Natural killer cell (primary cell): ENCODE measurements at regions of chr3 and their contacts with region 1.

Region 1: DNA sequence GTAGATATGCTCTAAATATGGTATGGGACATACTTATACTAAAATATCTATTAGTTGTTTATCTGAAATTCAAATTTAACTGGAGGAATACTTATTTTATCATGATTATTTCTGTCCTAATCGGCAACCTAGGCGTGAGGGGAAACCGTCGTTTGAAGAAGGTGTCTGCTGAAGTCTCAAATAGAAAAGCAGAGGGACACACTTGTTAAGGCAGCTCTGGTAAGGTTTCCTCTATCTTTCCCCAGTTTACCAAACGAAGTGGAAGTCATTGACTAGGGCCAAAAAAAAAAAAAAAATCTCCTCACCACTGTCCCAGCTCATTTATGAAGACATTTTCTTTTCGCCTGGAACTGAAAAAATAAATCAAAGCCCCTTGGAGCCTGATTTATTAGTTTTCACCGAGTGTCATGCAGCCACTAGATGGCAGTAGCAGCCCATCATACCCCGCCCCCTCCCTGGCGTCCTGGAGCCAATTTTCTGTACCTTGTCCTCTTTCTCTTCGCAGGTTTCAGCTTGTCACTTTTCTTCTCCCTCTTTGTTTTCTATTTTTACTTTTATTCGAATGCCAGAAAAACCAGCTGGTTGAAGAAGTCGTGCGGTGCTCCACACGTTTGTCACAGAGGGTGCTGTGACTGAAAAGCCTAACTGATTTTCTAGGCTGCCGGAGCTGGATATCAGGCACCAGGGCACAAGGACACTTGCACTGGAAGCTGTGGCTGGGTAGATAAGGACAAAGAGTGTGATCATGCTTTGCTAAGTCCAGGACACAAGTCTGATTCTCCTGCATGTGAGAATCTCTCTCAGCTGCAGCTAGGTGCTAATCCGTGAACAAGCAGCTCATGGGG is 238.7 kb downstream of the ZPLD1 start:
- DNase-seq: peak; percentile 47 to 68
- ATAC-seq: peak in 2 of 3 donors; percentile 64 to 75
- H3K4me3 ChIP-seq: no peak overlapping the region
- H3K4me3 Mint-ChIP-seq: no peak overlapping the region
- H3K27ac ChIP-seq: no peak overlapping the region
- H3K27ac Mint-ChIP-seq: no peak overlapping the region
- H3K4me1 ChIP-seq: no peaks in the 10 kb centered on the region
- H3K4me1 Mint-ChIP-seq: peaks cover 5 to 7% of the 10 kb centered on the region in 2 donors
- H3K27me3 ChIP-seq: peaks cover 3% of the 10 kb centered on the region
- H3K27me3 Mint-ChIP-seq: no peaks in the 10 kb centered on the region
- CTCF ChIP-seq: peak; percentile 94

Region 2: GRCh38 chr3:101868534-101869464 is 804.7 kb before region 1 on chr3:
- intact Hi-C with region 1: no loop called
- DNase-seq: no peak
- ATAC-seq: peak in 2 of 3 donors; percentile 21 to 42
- H3K4me3 ChIP-seq: no peak overlapping the region
- H3K4me3 Mint-ChIP-seq: no peak overlapping the region
- H3K27ac ChIP-seq: no peak overlapping the region
- H3K27ac Mint-ChIP-seq: no peak overlapping the region
- H3K4me1 ChIP-seq: no peaks in the 10 kb centered on the region
- H3K4me1 Mint-ChIP-seq: no peaks in the 10 kb centered on the region
- H3K27me3 ChIP-seq: no peaks in the 10 kb centered on the region
- H3K27me3 Mint-ChIP-seq: no peaks in the 10 kb centered on the region
- CTCF ChIP-seq: no peak

Region 3: DNA sequence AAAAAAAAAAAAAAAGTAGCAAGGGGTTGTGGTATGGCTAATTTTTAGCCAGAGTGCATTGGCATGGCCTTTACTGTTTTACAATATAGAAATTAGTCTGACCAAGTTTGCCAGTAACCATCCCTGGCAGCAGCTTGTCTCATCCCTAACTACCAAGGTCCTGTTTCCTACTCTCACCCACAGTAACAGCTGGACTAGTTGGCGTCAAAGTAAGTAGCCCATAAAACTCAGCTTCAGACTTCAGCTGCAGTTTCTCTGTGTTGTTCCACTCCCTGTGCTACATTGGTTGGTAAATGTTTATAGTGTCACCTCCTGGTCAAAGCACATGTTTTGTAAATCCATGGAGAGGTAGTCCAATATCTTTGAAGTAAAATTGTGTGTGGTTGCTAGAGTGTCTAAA is 452.6 kb after region 1 on chr3:
- intact Hi-C with region 1: loop called (anchors 1 kb)
- DNase-seq: no peak
- ATAC-seq: no peak
- H3K4me3 ChIP-seq: no peak overlapping the region
- H3K4me3 Mint-ChIP-seq: no peak overlapping the region
- H3K27ac ChIP-seq: no peak overlapping the region
- H3K27ac Mint-ChIP-seq: no peak overlapping the region
- H3K4me1 ChIP-seq: no peaks in the 10 kb centered on the region
- H3K4me1 Mint-ChIP-seq: no peaks in the 10 kb centered on the region
- H3K27me3 ChIP-seq: no peaks in the 10 kb centered on the region
- H3K27me3 Mint-ChIP-seq: peaks cover 2 to 12% of the 10 kb centered on the region in 2 donors
- CTCF ChIP-seq: no peak

Region 4: DNA sequence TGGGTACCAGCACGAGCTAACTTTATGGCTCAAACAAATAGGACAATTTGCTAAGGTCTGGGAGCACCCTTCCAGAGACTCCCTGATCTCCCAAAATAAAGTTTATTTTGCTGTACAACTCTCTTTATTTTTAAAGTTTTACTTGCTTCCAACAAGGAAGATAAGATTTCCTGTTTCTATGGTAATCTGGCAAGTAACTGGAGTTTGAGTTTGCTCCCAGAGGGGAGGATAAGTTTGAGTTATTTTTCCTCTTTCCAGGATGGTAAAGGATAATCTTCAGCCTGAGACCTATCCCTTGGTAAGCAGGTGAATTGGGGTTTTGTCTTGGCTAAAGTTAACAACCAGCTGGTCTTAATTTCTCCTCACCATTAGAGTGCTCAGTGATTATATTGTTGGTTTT is 1673.8 kb after region 1 on chr3:
- intact Hi-C with region 1: loop called (anchors 10 kb)
- DNase-seq: no peak
- ATAC-seq: no peak
- H3K4me3 ChIP-seq: no peak overlapping the region
- H3K4me3 Mint-ChIP-seq: no peak overlapping the region
- H3K27ac ChIP-seq: no peak overlapping the region
- H3K27ac Mint-ChIP-seq: no peak overlapping the region
- H3K4me1 ChIP-seq: no peaks in the 10 kb centered on the region
- H3K4me1 Mint-ChIP-seq: no peaks in the 10 kb centered on the region
- H3K27me3 ChIP-seq: no peaks in the 10 kb centered on the region
- H3K27me3 Mint-ChIP-seq: no peaks in the 10 kb centered on the region
- CTCF ChIP-seq: no peak

Region 5: GRCh38 chr3:104564045-104564643 is 1890.7 kb after region 1 on chr3:
- intact Hi-C with region 1: loop called (anchors 10 kb)
- DNase-seq: peak in 1 of 2 donors; percentile 70
- ATAC-seq: no peak
- H3K4me3 ChIP-seq: no peak overlapping the region
- H3K4me3 Mint-ChIP-seq: no peak overlapping the region
- H3K27ac ChIP-seq: no peak overlapping the region
- H3K27ac Mint-ChIP-seq: no peak overlapping the region
- H3K4me1 ChIP-seq: no peaks in the 10 kb centered on the region
- H3K4me1 Mint-ChIP-seq: no peaks in the 10 kb centered on the region
- H3K27me3 ChIP-seq: no peaks in the 10 kb centered on the region
- H3K27me3 Mint-ChIP-seq: no peaks in the 10 kb centered on the region
- CTCF ChIP-seq: peak; percentile 61